ENCODE measurements at regions of chr9 and their contacts with region 1.

Region 1: GRCh38 chr9:132235946-132236661 is 74.2 kb downstream of the NTNG2 start:
- DNase-seq: peak; percentile 89
- ATAC-seq: no peak

Region 2: GRCh38 chr9:132114102-132114707 is 121.9 kb before region 1 on chr9:
- intact Hi-C with region 1: no loop called
- DNase-seq: peak; percentile 79
- ATAC-seq: peak; percentile 63

Region 3: GRCh38 chr9:132201780-132202703 is 34.1 kb before region 1 on chr9:
- intact Hi-C with region 1: no loop called
- DNase-seq: no peak
- ATAC-seq: no peak

Region 4: GRCh38 chr9:132260846-132261245 is 24.7 kb after region 1 on chr9:
- intact Hi-C with region 1: loop called (anchors 1 kb)
- DNase-seq: no peak
- ATAC-seq: no peak